PC-9 (cell line): ENCODE measurements at regions of chr16 and their contacts with region 1.

Region 1: DNA sequence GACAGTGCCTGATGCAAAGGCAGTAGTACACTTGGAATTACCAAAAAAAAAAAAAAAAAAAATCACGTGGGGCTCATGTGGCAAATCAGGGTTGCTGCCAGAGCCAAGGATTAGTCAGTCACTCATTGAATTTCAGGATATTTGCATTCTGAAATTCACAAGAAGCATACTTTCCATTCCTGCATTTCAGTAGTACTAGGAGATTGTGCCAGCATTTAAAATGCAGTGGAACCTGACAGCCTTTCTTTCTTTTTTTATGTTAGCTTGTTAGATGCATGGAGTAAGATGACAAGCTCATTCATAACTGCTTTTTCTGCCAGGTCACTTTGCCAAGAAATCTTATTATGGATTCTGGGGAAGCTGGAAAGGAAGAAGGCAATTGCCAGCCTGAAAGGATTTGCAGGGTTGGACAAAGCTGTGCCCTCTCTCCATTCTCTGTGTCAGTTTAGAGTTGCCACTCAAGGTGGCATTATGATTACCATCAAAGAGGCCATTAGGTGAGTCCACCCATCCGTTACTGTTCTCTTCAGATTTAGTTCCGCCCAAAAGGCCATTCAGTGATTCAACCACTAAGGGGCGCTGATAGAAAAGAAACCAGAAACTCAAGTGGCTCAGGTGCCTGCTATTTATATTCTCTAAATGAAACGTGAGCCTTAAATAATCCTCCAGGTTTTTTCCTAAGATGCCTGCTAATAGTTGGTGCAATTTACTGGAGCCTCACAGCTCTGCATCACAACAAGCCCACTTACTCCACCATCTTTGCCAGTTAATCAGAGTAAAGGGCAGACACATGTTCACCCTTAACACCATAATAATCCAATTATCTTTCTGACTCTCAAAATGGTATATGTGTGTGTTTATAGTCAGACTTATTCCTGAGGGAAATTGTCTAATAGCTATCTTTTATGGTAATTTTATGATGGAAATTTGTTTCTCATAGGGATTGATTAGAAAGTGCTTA is 59.0 kb downstream of the TANGO6 start:
- DNase-seq: peak; percentile 60 to 67
- H3K4me3 ChIP-seq: no peak overlapping the region
- H3K27ac ChIP-seq: no peak overlapping the region
- H3K4me1 ChIP-seq: peaks cover 7% of the 10 kb centered on the region; the same call in 1 of the 2 replicates
- H3K27me3 ChIP-seq: no peaks in the 10 kb centered on the region
- CTCF ChIP-seq: peak; percentile 93

Region 2: DNA sequence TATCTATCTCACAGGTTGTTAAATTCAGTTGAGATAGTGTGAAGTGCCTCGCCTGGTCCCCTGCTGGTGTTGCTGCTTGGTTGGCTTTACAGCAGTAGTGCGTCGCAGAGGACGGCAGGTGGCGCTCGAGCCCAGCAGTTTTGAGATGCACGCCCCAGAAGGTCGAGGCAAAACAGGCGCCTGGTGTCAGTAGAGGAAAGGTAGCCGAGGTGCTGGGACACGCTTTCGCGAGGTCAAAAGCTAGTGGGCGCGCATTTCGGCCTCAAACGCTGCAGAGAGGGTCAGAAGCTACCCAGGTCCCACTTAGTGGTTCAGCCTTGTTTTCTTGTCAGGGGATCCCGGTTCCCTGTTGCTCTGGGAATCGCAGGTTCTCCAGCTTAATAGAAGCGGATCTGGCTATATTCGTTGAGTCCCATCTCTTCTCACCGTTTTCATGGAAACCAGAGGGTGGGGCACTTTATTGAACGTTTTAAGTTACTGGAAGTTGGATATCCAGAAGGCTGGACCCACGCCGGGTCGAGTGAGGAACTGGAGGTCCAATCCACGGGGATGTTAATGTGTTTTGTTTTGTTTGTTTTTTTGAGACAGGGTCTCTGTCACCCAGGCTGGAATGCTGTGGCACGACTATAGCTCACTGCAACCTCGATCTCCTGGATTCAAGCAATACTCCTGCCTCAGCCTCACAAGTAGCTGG is 373.5 kb before region 1 on chr16:
- CTCF ChIA-PET with region 1: no interaction called
- POLR2A ChIA-PET with region 1: no interaction called
- intact Hi-C with region 1: loop called (anchors 1 kb)
- DNase-seq: peak; percentile 62 to 81
- H3K4me3 ChIP-seq: no peak overlapping the region
- H3K27ac ChIP-seq: no peak overlapping the region
- H3K4me1 ChIP-seq: peaks cover 10% of the 10 kb centered on the region
- H3K27me3 ChIP-seq: no peaks in the 10 kb centered on the region
- CTCF ChIP-seq: peak; percentile 88

Region 3: DNA sequence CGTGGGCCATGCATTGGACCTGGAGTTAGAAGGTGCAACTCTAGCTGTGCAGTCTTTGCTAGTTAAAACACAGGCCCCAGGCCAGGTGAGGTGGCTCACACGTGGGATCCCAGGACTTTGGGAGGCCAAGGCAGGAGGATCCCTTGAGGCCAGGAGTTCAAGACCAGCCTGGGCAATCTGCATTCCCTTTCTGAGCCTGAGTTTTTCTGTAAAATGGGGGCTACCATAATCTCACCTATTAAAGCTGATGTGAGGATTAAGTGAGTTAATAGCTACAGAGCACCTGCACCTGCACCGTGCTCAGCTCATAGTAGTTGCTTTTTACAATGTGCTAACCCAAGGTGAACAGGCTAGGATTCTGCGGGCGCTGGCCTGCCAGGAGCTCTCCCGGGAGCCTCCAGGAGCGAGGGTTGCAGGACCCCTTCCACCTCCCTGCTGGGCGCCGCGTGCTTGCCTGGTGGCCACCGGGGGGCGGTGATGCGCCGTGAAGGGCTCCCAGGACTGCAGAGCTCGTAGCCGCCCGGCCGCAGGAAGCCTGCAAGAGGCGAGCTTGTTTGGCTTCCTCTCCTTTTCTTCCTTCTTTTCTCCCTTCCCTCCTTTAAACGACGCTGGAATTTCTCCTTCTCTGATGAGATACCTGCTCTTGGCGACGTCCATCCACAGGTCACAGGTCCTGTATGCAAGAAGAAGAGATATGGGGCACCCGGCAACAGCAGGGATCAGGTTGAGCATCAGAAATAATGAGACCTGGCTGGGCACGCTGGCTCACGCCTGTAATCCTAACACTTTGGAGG is 311.9 kb before region 1 on chr16:
- CTCF ChIA-PET with region 1: interaction called, 3 read pairs
- POLR2A ChIA-PET with region 1: no interaction called
- intact Hi-C with region 1: loop called (anchors 5 kb)
- DNase-seq: peak; percentile 46 to 79
- H3K4me3 ChIP-seq: no peak overlapping the region
- H3K27ac ChIP-seq: no peak overlapping the region
- H3K4me1 ChIP-seq: no peaks in the 10 kb centered on the region
- H3K27me3 ChIP-seq: no peaks in the 10 kb centered on the region
- CTCF ChIP-seq: peak; percentile 92

Region 4: GRCh38 chr16:68921654-68922053 is 19.4 kb after region 1 on chr16:
- CTCF ChIA-PET with region 1: no interaction called
- POLR2A ChIA-PET with region 1: no interaction called
- intact Hi-C with region 1: no loop called
- DNase-seq: peak; percentile 67 to 97
- H3K4me3 ChIP-seq: peak overlapping the region; percentile 8; the same call in 1 of the 2 replicates
- H3K27ac ChIP-seq: peak overlapping the region; percentile 96
- H3K4me1 ChIP-seq: peaks cover 49% of the 10 kb centered on the region
- H3K27me3 ChIP-seq: no peaks in the 10 kb centered on the region
- CTCF ChIP-seq: no peak

Region 5: DNA sequence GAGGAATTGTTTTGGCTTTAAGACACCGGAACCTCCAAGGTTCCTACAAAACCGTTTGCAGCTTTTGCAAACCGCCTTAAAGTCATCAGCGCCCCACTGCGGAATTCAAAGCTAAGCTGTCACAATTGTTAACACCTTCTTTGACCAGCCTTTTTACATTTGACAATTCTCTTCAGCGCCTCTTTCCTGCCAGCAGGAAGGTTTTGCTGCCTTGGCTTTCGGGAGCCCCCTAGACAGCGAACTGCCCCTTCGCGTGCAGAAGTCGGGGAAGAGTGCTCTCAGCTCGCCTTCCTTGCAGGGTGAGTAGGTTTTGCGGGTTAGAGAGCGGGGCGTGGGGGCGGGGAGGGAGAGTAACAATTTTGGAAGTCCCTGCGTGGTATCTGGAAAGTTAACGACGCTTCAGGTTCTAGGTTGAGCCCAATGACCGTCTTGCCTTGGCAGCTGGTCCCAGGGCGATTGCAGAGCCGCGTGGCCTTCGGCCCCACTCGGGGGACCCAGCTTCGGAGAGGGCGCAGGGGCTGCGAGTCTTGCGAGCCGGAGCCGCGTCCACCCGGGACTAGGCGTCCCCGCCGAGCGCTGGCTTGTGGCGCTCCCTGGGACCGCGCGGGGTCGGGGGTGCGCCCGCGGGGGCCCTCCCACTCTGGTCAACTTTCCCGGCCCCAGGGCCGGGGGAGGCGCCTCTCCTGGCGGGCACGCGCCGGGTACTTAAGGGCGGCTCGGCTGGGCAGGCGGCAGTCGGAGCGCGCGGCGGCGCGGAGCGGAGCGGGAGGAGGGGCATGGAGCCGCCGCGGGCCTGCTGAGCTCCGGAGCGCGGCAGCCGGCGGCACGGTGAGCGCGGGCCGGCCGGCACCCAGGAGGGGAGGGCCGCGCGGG is 203.4 kb after region 1 on chr16 and contains the start of gene HAS3:
- CTCF ChIA-PET with region 1: interaction called, 4 read pairs
- POLR2A ChIA-PET with region 1: no interaction called
- intact Hi-C with region 1: loop called (anchors 1 kb)
- DNase-seq: peak; percentile 66 to 71
- H3K4me3 ChIP-seq: peak within 1 kb of the TSS; percentile 93
- H3K27ac ChIP-seq: no peak within 1 kb of the TSS
- H3K4me1 ChIP-seq: peaks cover 14% of the 10 kb centered on the region; the same call in 1 of the 2 replicates
- H3K27me3 ChIP-seq: no peaks in the 10 kb centered on the region
- CTCF ChIP-seq: peak; percentile 62; the same call in 1 of the 2 replicates
- total RNA-seq, gene HAS3: 2.5 and 2.7 TPM in 2 replicates

Region 6: GRCh38 chr16:69111216-69111875 is 209.1 kb after region 1 on chr16:
- CTCF ChIA-PET with region 1: no interaction called
- POLR2A ChIA-PET with region 1: interaction called, 23 read pairs
- intact Hi-C with region 1: no loop called
- DNase-seq: no peak
- H3K4me3 ChIP-seq: no peak overlapping the region
- H3K27ac ChIP-seq: no peak overlapping the region
- H3K4me1 ChIP-seq: peaks cover 14% of the 10 kb centered on the region; the same call in 1 of the 2 replicates
- H3K27me3 ChIP-seq: no peaks in the 10 kb centered on the region
- CTCF ChIP-seq: no peak

Region 7: DNA sequence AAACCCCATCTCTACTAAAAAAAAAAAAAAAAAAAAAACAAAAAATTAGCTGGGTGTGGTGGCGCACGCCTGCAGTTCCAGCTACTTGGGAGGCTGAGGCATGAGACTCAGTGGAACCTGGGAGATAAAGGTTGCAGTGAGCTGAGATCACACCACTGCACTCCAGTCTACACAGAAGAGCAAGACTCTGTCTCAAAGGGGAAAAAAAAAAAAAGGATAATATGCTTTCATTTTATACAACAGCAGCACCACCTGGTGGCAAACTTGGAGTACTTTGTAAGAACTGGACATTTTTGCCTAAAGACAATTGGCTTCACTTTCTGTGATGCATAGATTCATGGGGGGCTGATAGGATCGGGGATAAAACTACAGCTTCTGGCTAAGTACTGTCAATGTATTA is 221.6 kb after region 1 on chr16:
- CTCF ChIA-PET with region 1: interaction called, 6 read pairs
- POLR2A ChIA-PET with region 1: no interaction called
- intact Hi-C with region 1: loop called (anchors 1 kb)
- DNase-seq: peak; percentile 47 to 62
- H3K4me3 ChIP-seq: no peak overlapping the region
- H3K27ac ChIP-seq: no peak overlapping the region
- H3K4me1 ChIP-seq: no peaks in the 10 kb centered on the region
- H3K27me3 ChIP-seq: no peaks in the 10 kb centered on the region
- CTCF ChIP-seq: peak; percentile 87

Region 8: GRCh38 chr16:69193855-69194254 is 291.6 kb after region 1 on chr16:
- CTCF ChIA-PET with region 1: interaction called, 23 read pairs
- POLR2A ChIA-PET with region 1: no interaction called
- intact Hi-C with region 1: no loop called
- DNase-seq: no peak
- H3K4me3 ChIP-seq: no peak overlapping the region
- H3K27ac ChIP-seq: no peak overlapping the region
- H3K4me1 ChIP-seq: peaks cover 21% of the 10 kb centered on the region
- H3K27me3 ChIP-seq: no peaks in the 10 kb centered on the region
- CTCF ChIP-seq: no peak